ENCODE measurements at regions of chr6 and their contacts with region 1.

Region 1: GRCh38 chr6:29948277-29948676 is 5.9 kb downstream of the HLA-A start:
- DNase-seq: no peak
- H3K4me3 ChIP-seq: no peak overlapping the region
- H3K4me3 Mint-ChIP-seq: no peak overlapping the region
- H3K27ac ChIP-seq: no peak overlapping the region
- H3K27ac Mint-ChIP-seq: peak overlapping the region in 4 of 7 donors; percentile 45 to 67 (median 55)
- H3K4me1 ChIP-seq: peaks cover 19 to 32% of the 10 kb centered on the region in 2 donors
- H3K4me1 Mint-ChIP-seq: peaks cover 57% of the 10 kb centered on the region
- H3K27me3 ChIP-seq: no peaks in the 10 kb centered on the region
- H3K27me3 Mint-ChIP-seq: peaks cover 0 to 4% (median under 1%) of the 10 kb centered on the region in 3 donors
- CTCF ChIP-seq: no peak

Region 2: GRCh38 chr6:29332672-29333071 is 615.6 kb before region 1 on chr6:
- intact Hi-C with region 1: no loop called
- DNase-seq: no peak
- H3K4me3 ChIP-seq: no peak overlapping the region
- H3K4me3 Mint-ChIP-seq: no peak overlapping the region
- H3K27ac ChIP-seq: no peak overlapping the region
- H3K27ac Mint-ChIP-seq: peak overlapping the region in 1 of 7 donors; percentile 52
- H3K4me1 ChIP-seq: no peaks in the 10 kb centered on the region
- H3K4me1 Mint-ChIP-seq: no peaks in the 10 kb centered on the region
- H3K27me3 ChIP-seq: no peaks in the 10 kb centered on the region
- H3K27me3 Mint-ChIP-seq: peaks cover 0 to 5% (median 4%) of the 10 kb centered on the region in 3 donors
- CTCF ChIP-seq: no peak

Region 3: GRCh38 chr6:29892696-29893095 is 55.6 kb before region 1 on chr6:
- intact Hi-C with region 1: loop called in 1 of 2 experiments (anchors 2 kb)
- DNase-seq: no peak
- H3K4me3 ChIP-seq: no peak overlapping the region
- H3K4me3 Mint-ChIP-seq: no peak overlapping the region
- H3K27ac ChIP-seq: no peak overlapping the region
- H3K27ac Mint-ChIP-seq: no peak overlapping the region
- H3K4me1 ChIP-seq: peaks cover 7% of the 10 kb centered on the region in 2 donors
- H3K4me1 Mint-ChIP-seq: peaks cover 22% of the 10 kb centered on the region
- H3K27me3 ChIP-seq: peaks cover 0 to under 1% of the 10 kb centered on the region in 2 donors
- H3K27me3 Mint-ChIP-seq: peaks cover 0 to 6% (median 2%) of the 10 kb centered on the region in 3 donors
- CTCF ChIP-seq: no peak

Region 4: GRCh38 chr6:30037182-30037788 is 89.0 kb after region 1 on chr6:
- intact Hi-C with region 1: no loop called
- DNase-seq: peak in 2 of 3 donors; percentile 15 to 28
- H3K4me3 ChIP-seq: no peak overlapping the region
- H3K4me3 Mint-ChIP-seq: no peak overlapping the region
- H3K27ac ChIP-seq: no peak overlapping the region
- H3K27ac Mint-ChIP-seq: peak overlapping the region in 1 of 7 donors; percentile 12
- H3K4me1 ChIP-seq: peaks cover 17 to 22% of the 10 kb centered on the region in 2 donors
- H3K4me1 Mint-ChIP-seq: peaks cover 26% of the 10 kb centered on the region
- H3K27me3 ChIP-seq: no peaks in the 10 kb centered on the region
- H3K27me3 Mint-ChIP-seq: no peaks in the 10 kb centered on the region
- CTCF ChIP-seq: peak; percentile 75